Naive thymus-derived CD4-positive, alpha-beta T cell (primary cell): ENCODE measurements at regions of chr6 and their contacts with region 1.

Region 1: DNA sequence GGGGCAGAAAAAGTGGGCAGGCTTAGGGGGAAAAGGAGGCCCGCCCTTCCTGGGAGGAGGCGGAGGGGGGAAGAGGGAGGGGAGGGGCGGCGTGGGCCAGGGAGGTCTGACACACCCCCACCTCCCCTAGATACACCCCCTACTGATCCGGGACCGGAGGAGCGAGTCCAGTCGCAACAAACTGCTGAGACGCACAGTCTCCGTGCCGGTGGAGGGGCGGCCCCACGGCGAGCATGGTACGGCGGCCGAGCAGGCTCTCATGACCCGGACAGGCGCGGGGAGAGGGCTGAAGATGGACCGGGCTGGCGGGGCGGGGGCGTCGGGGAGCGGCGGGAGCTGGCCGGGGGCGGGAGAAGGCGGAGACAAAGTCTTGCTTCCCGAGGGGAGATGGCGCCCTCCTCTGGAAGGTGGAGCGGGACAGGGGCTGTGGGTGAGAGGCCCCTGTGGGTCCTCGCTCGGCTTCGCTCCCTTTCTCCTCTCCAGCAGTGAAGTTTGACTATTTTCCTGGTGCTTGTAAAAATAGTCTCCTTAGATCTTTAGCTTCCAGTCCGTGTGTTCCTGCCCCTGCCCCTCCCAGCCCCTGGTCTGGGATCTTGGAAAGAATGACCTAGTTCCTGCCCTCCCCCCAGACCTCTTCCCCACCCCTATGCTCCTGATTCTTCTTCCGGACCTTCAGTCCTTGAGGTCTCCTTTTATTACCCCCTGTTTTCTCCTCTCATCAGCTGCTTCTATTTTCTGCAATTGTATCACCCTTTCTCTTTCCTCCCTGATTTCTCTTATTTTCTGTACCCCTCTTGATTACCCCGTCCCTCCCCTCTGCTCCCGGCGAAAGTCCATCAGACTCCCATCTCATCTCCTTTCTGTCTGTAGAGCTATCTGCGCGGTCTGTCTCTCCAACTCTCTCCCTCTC is 6.1 kb downstream of the SYNGAP1 start:
- DNase-seq: peak; percentile 57 to 85 (median 74)
- ATAC-seq: peak; percentile 72
- H3K4me3 ChIP-seq: peak overlapping the region; percentile 73
- H3K4me3 Mint-ChIP-seq: peak overlapping the region; percentile 84 to 98 (median 95)
- H3K27ac ChIP-seq: peak overlapping the region; percentile 88
- H3K27ac Mint-ChIP-seq: peak overlapping the region; percentile 88 to 99 (median 95)
- H3K4me1 ChIP-seq: peaks cover 43 to 46% of the 10 kb centered on the region in 2 donors
- H3K4me1 Mint-ChIP-seq: peaks cover 64 to 89% (median 82%) of the 10 kb centered on the region in 7 donors
- H3K27me3 ChIP-seq: no peaks in the 10 kb centered on the region
- H3K27me3 Mint-ChIP-seq: no peaks in the 10 kb centered on the region

Region 2: DNA sequence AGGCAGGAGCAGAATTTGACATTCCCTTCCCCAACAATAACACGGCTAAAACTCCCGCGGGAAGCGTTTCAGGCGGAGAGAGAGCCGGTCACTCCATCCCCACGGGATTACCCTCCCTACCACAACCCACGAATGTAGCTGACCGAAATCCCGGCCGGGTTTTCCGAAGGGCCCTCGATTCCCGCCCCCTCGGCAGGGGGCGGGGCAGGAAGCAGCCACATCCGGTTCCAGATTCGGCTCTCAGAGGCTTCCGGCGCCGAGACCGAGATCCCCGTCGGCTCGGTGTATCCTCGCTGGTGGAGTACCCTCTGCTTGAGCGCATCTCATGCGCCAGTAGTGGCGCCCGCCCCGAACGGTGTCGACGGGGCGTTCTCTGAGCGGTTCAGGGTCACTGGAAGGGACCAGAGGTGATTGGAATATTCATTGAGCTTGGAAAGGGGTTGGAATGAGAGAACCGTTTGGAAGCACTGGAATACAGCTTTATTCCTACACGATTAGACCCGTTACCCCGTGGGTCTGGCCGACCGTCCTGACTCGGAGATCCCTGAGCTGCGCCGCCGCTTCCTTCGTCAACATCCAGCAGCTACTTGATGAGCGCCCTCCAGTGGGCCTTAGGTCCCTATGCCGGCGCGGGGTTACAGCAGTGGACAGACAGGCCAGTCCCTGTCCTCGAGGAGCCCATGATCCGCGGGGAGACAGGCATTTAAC is 126.5 kb before region 1 on chr6:
- CTCF ChIA-PET with region 1: no interaction called
- POLR2A ChIA-PET with region 1: interaction called, 12 read pairs
- intact Hi-C with region 1: loop called (anchors 5 kb)
- DNase-seq: peak; percentile 89 to 96 (median 93)
- ATAC-seq: peak; percentile 88
- H3K4me3 ChIP-seq: peak overlapping the region; percentile 78
- H3K4me3 Mint-ChIP-seq: peak overlapping the region; percentile 95 to 100 (median 99)
- H3K27ac ChIP-seq: peak overlapping the region; percentile 92
- H3K27ac Mint-ChIP-seq: peak overlapping the region; percentile 95 to 100 (median 99)
- H3K4me1 ChIP-seq: peaks cover 5 to 10% of the 10 kb centered on the region in 2 donors
- H3K4me1 Mint-ChIP-seq: peaks cover 25 to 48% (median 38%) of the 10 kb centered on the region in 7 donors
- H3K27me3 ChIP-seq: no peaks in the 10 kb centered on the region
- H3K27me3 Mint-ChIP-seq: peaks cover 0 to 3% (median 0%) of the 10 kb centered on the region in 5 donors

Region 3: DNA sequence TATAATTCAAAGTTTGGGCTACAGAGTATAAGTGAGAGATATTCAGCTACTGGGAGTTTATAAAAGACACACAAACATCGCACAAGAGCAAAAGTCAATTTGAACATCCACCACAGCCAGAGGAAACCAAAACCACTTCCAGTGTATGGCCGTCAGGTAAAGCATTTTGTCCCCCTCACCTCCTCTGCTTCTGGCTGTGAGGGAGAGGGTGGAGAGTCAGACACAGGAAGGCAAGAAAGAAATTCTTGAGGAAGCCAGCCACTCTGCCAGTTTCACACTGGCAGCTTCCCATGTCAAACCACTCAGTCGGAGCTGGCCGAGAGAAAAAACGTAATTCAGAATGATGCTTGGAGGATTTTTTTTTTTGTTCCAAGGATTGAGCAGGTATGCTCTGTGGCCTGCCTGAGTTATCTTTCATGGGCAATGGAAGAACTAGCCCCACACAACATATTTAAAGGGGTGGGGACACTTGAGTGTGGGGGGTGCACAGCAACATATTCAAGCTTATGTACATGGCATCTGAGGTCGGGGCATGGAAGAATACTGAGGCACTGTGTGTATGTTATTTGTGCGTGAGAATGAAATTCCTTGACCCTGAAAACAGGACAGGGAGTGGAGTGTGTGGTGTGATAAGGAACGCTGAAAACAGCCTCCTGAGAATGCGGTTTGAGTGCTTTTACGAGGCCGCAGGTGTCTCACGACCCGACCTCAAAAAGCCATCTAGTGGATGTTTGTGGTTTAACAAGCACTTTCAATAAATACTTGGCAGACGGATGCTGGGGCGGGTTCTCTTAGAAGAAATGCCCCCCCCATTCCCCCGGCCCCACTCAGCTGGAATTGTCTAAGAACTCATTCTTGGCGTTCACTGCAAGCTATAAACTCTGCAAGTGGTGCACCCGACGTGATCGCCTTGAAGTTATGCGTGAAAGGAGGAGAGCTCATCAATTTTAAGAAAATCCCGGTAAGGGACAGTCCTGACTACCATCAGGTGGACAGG is 80.9 kb before region 1 on chr6:
- CTCF ChIA-PET with region 1: interaction called, 9 read pairs
- POLR2A ChIA-PET with region 1: interaction called, 9 read pairs
- intact Hi-C with region 1: loop called in 1 of 2 experiments (anchors 2 kb)
- DNase-seq: peak; percentile 28 to 87 (median 82)
- ATAC-seq: peak; percentile 60
- H3K4me3 ChIP-seq: peak overlapping the region; percentile 64
- H3K4me3 Mint-ChIP-seq: peak overlapping the region; percentile 68 to 89 (median 86)
- H3K27ac ChIP-seq: peak overlapping the region; percentile 60
- H3K27ac Mint-ChIP-seq: peak overlapping the region; percentile 88 to 99 (median 96)
- H3K4me1 ChIP-seq: peaks cover 23 to 33% of the 10 kb centered on the region in 2 donors
- H3K4me1 Mint-ChIP-seq: peaks cover 22 to 54% (median 41%) of the 10 kb centered on the region in 7 donors
- H3K27me3 ChIP-seq: no peaks in the 10 kb centered on the region
- H3K27me3 Mint-ChIP-seq: peaks cover 0 to 7% (median 0%) of the 10 kb centered on the region in 5 donors

Region 4: DNA sequence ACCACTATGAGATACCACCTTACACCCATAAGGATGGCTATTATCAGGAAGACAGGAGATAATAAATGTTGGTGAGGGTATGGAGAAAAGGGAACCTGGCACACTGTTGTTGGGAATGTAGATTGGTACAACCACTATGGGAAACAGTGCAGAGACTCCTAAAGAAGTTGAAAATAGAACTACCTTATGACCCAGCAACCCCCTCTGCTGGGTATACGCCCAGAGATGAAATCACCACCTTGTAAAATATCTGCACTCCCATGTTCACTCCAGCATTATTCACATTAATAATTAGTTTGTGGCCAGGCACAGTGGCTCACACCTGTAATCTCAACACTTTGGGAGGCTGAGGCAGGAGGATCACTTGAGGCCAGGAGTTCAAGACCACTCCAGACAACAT is 55.3 kb after region 1 on chr6:
- CTCF ChIA-PET with region 1: no interaction called
- POLR2A ChIA-PET with region 1: no interaction called
- intact Hi-C with region 1: loop called in 1 of 2 experiments (anchors 2 kb)
- DNase-seq: peak in 5 of 9 donors; percentile 2 to 19 (median 9)
- ATAC-seq: no peak
- H3K4me3 ChIP-seq: no peak overlapping the region
- H3K4me3 Mint-ChIP-seq: no peak overlapping the region
- H3K27ac ChIP-seq: no peak overlapping the region
- H3K27ac Mint-ChIP-seq: no peak overlapping the region
- H3K4me1 ChIP-seq: no peaks in the 10 kb centered on the region
- H3K4me1 Mint-ChIP-seq: no peaks in the 10 kb centered on the region
- H3K27me3 ChIP-seq: no peaks in the 10 kb centered on the region
- H3K27me3 Mint-ChIP-seq: peaks cover 0 to 17% (median 0%) of the 10 kb centered on the region in 5 donors

Region 5: DNA sequence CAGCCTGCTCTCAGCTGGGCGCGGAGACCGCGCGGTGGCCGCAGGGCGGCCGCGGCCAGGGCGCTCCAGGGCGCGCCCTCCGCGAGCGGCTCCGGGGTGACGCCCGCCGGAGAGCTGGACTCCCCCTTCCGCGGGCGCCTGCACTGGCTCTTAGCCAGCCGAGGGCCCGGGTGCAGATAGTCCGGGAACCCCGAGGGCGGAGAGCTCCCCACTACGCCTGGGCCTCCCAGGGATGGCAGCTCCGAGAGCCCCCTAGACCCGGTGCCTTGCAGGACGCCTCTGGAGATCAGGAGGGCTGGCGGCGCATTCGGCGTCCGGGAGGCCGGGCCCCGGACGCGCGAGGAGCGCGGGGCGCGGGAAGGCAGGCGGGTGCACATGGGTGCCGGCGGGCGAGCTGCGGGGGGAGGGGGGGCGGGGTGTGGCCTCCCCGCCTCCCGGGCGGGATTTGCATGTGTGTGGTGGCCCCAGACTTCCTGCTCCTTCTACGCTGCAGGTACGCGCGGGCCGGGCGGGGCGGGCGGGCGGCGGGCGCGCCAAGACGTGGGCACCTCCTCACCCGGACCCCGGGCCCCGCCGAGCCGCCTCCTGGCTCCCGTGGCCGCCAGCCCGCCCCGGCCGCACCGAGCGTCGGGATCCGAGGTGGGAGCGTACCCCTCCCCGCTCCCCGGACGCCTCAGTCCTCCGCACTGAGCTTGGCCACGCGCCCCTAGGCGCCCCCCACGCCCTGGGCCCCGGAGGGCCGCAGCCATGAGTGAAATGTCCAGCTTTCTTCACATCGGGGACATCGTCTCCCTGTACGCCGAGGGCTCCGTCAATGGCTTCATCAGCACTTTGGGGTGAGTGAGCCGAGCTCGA is 195.2 kb after region 1 on chr6 and contains the start of gene ITPR3:
- CTCF ChIA-PET with region 1: no interaction called
- POLR2A ChIA-PET with region 1: interaction called, 5 read pairs
- intact Hi-C with region 1: loop called in 1 of 2 experiments (anchors 5 kb)
- DNase-seq: peak; percentile 63 to 83 (median 80)
- ATAC-seq: peak; percentile 94
- H3K4me3 ChIP-seq: peak within 1 kb of the TSS; percentile 80
- H3K4me3 Mint-ChIP-seq: peak within 1 kb of the TSS; percentile 91 to 97 (median 96)
- H3K27ac ChIP-seq: peak within 1 kb of the TSS; percentile 97
- H3K27ac Mint-ChIP-seq: peak within 1 kb of the TSS; percentile 82 to 96 (median 94)
- H3K4me1 ChIP-seq: peaks cover 9 to 35% of the 10 kb centered on the region in 2 donors
- H3K4me1 Mint-ChIP-seq: peaks cover 29 to 74% (median 66%) of the 10 kb centered on the region in 7 donors
- H3K27me3 ChIP-seq: no peaks in the 10 kb centered on the region
- H3K27me3 Mint-ChIP-seq: peaks cover 0 to 2% (median 0%) of the 10 kb centered on the region in 5 donors
- total RNA-seq, gene ITPR3: 35.6 to 65.7 (median 47.7) TPM

Region 6: DNA sequence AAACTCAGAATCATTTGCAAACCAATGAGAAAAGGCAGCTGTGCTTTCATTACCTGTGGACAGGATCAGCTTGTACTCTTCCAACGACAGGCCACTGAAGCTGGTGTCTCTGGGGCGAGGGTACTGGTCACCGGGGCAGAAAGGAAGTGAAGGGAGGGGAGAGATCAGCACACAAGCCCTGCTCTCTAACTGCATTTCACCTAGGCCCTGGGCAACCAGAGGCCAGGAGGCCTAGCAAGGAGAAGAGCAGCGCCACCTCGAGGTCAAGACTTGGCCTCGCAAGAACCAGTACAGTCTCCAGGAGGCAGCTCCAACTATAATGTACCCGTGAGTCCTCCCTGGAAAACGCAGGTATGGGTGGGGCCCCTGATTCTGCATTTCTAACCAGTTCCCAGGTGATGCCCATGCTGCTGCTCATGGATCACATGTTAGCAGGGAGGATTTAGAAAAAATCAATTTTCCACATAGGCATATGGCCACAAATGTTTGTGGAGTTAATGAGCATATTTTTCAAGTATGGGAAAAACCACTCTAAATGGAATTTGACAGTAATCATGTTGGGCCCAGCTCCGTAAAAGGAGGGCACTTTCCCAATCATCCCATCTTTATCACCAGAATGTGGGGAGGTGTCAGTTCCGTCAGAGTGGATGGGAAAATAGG is 274.6 kb after region 1 on chr6:
- CTCF ChIA-PET with region 1: no interaction called
- POLR2A ChIA-PET with region 1: interaction called, 5 read pairs
- intact Hi-C with region 1: loop called in 1 of 2 experiments (anchors 10 kb)
- DNase-seq: peak; percentile 51 to 76 (median 71)
- ATAC-seq: peak; percentile 78
- H3K4me3 ChIP-seq: no peak overlapping the region
- H3K4me3 Mint-ChIP-seq: peak overlapping the region in 1 of 10 donors; percentile 32
- H3K27ac ChIP-seq: peak overlapping the region; percentile 38
- H3K27ac Mint-ChIP-seq: peak overlapping the region; percentile 53 to 93 (median 84)
- H3K4me1 ChIP-seq: peaks cover 19 to 37% of the 10 kb centered on the region in 2 donors
- H3K4me1 Mint-ChIP-seq: peaks cover 21 to 59% (median 44%) of the 10 kb centered on the region in 7 donors
- H3K27me3 ChIP-seq: no peaks in the 10 kb centered on the region
- H3K27me3 Mint-ChIP-seq: no peaks in the 10 kb centered on the region

Region 7: GRCh38 chr6:33761922-33762629 is 336.2 kb after region 1 on chr6:
- CTCF ChIA-PET with region 1: no interaction called
- POLR2A ChIA-PET with region 1: no interaction called
- intact Hi-C with region 1: no loop called
- DNase-seq: peak in 6 of 9 donors; percentile 21 to 34 (median 30)
- ATAC-seq: peak; percentile 67
- H3K4me3 ChIP-seq: no peak overlapping the region
- H3K4me3 Mint-ChIP-seq: no peak overlapping the region
- H3K27ac ChIP-seq: no peak overlapping the region
- H3K27ac Mint-ChIP-seq: peak overlapping the region in 1 of 9 donors; percentile 8
- H3K4me1 ChIP-seq: no peaks in the 10 kb centered on the region
- H3K4me1 Mint-ChIP-seq: no peaks in the 10 kb centered on the region
- H3K27me3 ChIP-seq: no peaks in the 10 kb centered on the region
- H3K27me3 Mint-ChIP-seq: peaks cover 0 to 8% (median 5%) of the 10 kb centered on the region in 5 donors